SK-N-SH (cell line): ENCODE measurements at regions of chr12 and their contacts with region 1.

Region 1: DNA sequence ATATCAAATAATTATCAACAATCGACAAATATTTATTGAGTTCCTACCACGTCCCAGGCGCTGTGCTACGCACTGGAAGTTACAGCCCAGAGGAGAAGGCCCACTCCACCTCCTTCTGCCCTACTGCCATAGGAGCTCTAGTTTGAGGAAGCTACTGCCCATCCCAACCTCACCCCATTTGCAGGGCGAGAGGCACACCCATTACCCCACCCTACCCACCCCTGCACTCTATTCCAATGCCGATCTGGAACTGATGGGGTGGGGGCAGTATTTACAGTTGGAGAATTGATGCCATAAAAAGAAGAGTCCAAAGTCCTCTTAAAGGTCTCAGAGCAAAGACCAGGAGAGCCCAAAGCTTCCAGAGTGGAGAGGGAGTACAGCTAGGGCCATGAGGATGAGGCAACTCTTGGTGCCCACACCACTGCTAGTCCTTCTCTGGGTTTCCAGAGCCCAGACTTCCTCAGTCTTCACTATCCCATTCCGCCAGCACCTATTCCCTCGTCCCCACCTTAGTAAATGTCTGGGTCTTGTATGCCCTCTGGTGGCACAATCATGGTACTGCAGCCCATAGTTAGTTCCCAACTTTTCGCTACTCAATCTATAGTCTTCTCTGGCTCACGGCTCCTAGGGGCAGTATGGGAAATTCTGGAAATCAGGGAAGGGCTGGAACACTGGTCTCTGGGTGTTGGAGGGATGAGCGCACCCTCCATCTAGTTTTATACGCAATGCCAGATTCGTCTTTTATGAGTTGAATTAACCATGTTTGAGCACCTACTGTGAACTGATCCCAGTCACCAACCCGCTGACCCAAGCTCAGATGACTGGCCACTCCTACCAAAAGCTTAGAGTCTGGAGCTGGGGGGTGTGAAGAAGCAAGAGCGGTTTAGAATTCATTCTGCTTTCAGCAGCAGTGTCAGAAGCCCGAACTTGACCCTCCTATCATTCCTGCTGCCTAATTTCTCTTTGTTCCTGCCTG is 6.9 kb upstream of the ADCY6 start:
- DNase-seq: peak; percentile 88
- H3K4me3 ChIP-seq: no peak overlapping the region; a peak in 1 of 4 replicates
- H3K27ac ChIP-seq: no peak overlapping the region
- H3K4me1 ChIP-seq: no peaks in the 10 kb centered on the region; a peak in 1 of 4 replicates
- H3K27me3 ChIP-seq: no peaks in the 10 kb centered on the region
- CTCF ChIP-seq: peak; percentile 94
- EP300 ChIP-seq: no peak
- RAD21 ChIP-seq: peak; percentile 98

Region 2: DNA sequence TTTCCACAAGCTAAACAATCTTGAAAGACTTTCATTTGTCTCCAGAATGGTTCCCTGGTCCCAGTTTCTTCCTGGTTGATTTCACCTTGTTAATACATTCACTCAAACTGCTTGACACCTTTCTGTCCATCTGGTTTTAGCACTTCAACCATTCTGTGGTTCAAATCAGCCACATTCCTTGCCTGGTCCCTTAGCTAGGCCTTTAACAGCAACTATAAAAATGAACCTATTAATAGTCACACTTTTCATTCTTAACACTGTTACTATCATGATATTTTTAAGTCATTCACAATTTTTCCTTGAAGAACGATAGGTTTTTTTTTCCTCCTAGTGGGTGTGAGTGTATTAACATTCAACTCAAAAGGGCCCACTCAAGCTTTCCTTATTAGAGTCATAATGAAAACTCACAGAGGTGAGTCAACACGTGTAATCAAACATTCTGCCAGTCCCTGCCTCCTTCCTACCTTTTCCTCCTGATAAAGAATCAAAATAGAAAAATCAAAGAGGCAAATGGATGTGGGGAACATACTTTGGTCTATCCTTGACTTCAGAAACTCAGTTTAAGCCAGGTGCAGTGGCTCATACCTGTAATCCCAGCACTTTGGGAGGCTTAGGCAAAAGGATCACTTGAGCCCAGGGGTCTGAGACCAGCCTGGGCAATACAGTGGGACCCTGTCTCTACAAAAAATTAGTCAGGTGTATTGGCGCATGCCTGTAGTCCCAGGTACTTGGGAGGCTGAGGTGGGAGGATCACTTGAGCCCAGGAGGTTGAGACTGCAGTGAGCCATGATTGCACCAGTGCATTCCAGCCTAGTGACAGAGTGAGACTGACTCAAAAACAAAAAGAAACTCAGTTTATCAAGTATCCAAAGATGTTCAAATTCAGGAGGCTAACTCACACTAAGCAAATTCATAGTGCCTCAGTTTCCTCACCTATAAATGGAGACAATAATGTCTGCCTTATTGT is 44.7 kb before region 1 on chr12:
- CTCF ChIA-PET with region 1: interaction called, 234 read pairs
- POLR2A ChIA-PET with region 1: no interaction called
- DNase-seq: no peak
- H3K4me3 ChIP-seq: no peak overlapping the region
- H3K27ac ChIP-seq: no peak overlapping the region
- H3K4me1 ChIP-seq: no peaks in the 10 kb centered on the region
- H3K27me3 ChIP-seq: no peaks in the 10 kb centered on the region
- CTCF ChIP-seq: no peak
- EP300 ChIP-seq: no peak
- RAD21 ChIP-seq: no peak

Region 3: DNA sequence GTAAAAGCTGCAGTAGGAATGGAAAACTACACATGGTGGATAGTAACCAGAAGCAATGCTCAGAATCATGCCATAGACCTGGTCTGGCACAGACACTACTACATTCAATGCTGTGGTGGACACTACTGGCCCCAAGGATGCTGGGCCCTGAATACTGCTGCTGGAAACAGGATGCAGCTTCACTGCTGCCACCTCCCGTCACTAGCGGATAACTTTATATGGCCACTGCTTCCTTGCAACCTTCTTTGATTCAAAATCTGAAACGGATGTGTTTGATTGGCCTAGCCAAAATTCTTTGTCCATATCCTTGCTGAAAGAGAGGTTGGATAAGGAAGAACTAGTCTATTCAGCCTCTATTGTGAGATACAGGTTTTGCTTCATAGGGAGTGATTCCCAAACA is 37.5 kb before region 1 on chr12:
- CTCF ChIA-PET with region 1: interaction called, 234 read pairs
- POLR2A ChIA-PET with region 1: no interaction called
- DNase-seq: no peak
- H3K4me3 ChIP-seq: no peak overlapping the region
- H3K27ac ChIP-seq: no peak overlapping the region
- H3K4me1 ChIP-seq: no peaks in the 10 kb centered on the region
- H3K27me3 ChIP-seq: no peaks in the 10 kb centered on the region
- CTCF ChIP-seq: no peak
- EP300 ChIP-seq: no peak
- RAD21 ChIP-seq: no peak

Region 4: DNA sequence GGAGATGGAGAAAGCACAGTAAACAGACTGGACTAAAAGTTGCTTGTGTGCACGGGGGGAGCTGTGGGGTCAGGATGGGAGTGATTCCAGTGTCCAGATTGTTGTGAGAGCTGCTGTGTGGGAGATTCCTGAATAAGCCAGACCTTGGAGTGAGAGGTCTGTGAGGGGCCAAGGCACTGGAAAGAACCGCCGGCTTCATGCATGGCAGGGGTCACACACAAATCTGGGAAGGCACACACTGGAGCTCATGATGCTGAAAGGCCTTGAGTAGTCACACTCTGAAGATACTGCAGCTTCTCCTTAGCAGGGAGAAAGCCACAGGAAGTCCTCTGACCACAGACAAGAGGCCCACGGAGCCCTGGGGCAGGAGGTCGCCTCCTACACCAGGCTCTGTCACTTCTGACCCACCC is 30.0 kb before region 1 on chr12:
- CTCF ChIA-PET with region 1: interaction called, 11 read pairs
- POLR2A ChIA-PET with region 1: no interaction called
- DNase-seq: no peak
- H3K4me3 ChIP-seq: no peak overlapping the region
- H3K27ac ChIP-seq: no peak overlapping the region
- H3K4me1 ChIP-seq: no peaks in the 10 kb centered on the region
- H3K27me3 ChIP-seq: no peaks in the 10 kb centered on the region
- CTCF ChIP-seq: no peak
- EP300 ChIP-seq: no peak
- RAD21 ChIP-seq: no peak

Region 5: DNA sequence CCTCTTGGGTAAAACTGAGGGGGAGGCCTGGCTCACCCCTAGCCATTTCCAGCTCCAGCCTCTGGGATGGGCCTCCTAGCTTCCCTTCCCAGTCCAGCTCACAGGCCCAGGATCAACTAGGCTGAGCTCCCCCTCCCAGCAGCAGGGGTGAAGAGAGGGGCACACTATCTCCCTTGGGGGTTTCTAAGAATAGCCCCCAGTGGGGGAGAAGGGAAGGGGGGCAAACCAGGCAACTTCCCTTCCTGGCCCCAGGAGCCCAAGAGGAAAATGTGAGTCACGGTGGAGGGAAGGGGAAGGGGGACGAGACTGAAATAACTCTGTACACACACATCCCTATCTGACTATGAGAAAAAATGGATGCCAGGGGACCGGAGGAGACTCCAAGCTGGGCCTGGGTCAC is 15.9 kb before region 1 on chr12:
- CTCF ChIA-PET with region 1: interaction called, 37 read pairs
- POLR2A ChIA-PET with region 1: no interaction called
- DNase-seq: no peak
- H3K4me3 ChIP-seq: no peak overlapping the region
- H3K27ac ChIP-seq: peak overlapping the region in 1 of 2 experiments; percentile 79; a peak in 2 of 4 replicates
- H3K4me1 ChIP-seq: peaks cover 4 to 14% of the 10 kb centered on the region in 2 experiments; a peak in 3 of 4 replicates
- H3K27me3 ChIP-seq: no peaks in the 10 kb centered on the region
- CTCF ChIP-seq: no peak
- EP300 ChIP-seq: peak in 1 of 2 experiments; percentile 48; a peak in 1 of 4 replicates
- RAD21 ChIP-seq: no peak

Region 6: GRCh38 chr12:48917857-48918537 is 122.2 kb after region 1 on chr12:
- CTCF ChIA-PET with region 1: no interaction called
- POLR2A ChIA-PET with region 1: no interaction called
- DNase-seq: no peak
- H3K4me3 ChIP-seq: no peak overlapping the region
- H3K27ac ChIP-seq: no peak overlapping the region
- H3K4me1 ChIP-seq: no peaks in the 10 kb centered on the region; a peak in 1 of 4 replicates
- H3K27me3 ChIP-seq: no peaks in the 10 kb centered on the region
- CTCF ChIP-seq: no peak
- EP300 ChIP-seq: no peak
- RAD21 ChIP-seq: no peak